ENCODE measurements at regions of chr3 and their contacts with region 1.

Region 1: GRCh38 chr3:12868039-12869034 is 27.0 kb upstream of the RPL32 start:
- DNase-seq: peak; percentile 83
- H3K4me3 Mint-ChIP-seq: no peak overlapping the region
- H3K27ac Mint-ChIP-seq: no peak overlapping the region
- H3K4me1 Mint-ChIP-seq: peaks cover 8% of the 10 kb centered on the region
- H3K27me3 Mint-ChIP-seq: peaks cover 33% of the 10 kb centered on the region
- CTCF ChIP-seq: peak; percentile 82

Region 2: GRCh38 chr3:12891985-12892839 is 23.9 kb after region 1 on chr3:
- CTCF ChIA-PET with region 1: interaction called, 27 read pairs
- POLR2A ChIA-PET with region 1: interaction called, 9 read pairs
- intact Hi-C with region 1: loop called (anchors 1 kb)
- DNase-seq: peak; percentile 65
- H3K4me3 Mint-ChIP-seq: no peak overlapping the region
- H3K27ac Mint-ChIP-seq: no peak overlapping the region
- H3K4me1 Mint-ChIP-seq: peaks cover 11% of the 10 kb centered on the region
- H3K27me3 Mint-ChIP-seq: peaks cover 31% of the 10 kb centered on the region
- CTCF ChIP-seq: peak; percentile 84

Region 3: GRCh38 chr3:12984023-12984823 is 115.9 kb after region 1 on chr3:
- CTCF ChIA-PET with region 1: interaction called, 6 read pairs
- POLR2A ChIA-PET with region 1: no interaction called
- intact Hi-C with region 1: loop called (anchors 1 kb)
- DNase-seq: peak; percentile 78
- H3K4me3 Mint-ChIP-seq: no peak overlapping the region
- H3K27ac Mint-ChIP-seq: no peak overlapping the region
- H3K4me1 Mint-ChIP-seq: no peaks in the 10 kb centered on the region
- H3K27me3 Mint-ChIP-seq: no peaks in the 10 kb centered on the region
- CTCF ChIP-seq: peak; percentile 81

Region 4: DNA sequence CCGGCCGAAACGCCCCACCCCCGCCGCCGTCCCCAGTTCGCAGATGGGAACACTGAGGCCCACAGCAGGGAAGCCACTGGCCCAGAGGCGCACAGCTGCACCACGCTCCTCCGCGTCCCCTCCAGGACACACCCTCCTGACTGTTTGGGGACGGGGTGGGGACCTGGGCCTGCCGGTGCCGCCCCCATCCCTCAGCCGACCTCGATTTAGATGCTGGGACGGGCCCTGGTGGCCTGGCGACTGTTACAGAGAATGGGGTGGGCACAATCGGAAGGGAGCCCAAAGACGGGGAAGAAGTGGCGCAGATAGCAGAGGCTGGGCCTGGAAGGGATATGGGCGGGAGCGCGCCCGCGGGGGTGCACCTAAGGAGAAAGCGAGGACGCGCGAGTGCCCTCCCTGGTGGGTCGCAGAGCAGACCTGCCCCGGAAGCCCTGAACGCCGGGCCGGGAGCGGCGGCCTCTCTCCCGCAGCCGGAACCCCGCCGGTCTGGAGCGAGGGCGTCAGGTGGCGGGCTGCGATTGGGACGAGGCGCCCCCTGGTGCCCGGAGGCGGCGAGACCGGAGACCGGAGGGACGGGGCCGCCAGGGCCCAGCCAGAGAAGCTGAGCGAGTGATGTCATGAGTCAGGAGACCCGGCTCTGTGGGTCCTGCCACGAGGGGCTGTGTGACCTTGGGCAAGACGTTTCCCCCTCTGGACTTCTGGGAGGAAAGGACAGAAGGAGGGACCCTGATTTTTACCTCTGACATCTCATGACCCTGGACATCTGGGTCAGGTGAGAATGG is 126.5 kb after region 1 on chr3:
- CTCF ChIA-PET with region 1: interaction called, 5 read pairs
- POLR2A ChIA-PET with region 1: no interaction called
- intact Hi-C with region 1: loop called (anchors 1 kb)
- DNase-seq: peak; percentile 77
- H3K4me3 Mint-ChIP-seq: peak overlapping the region; percentile 90
- H3K27ac Mint-ChIP-seq: no peak overlapping the region
- H3K4me1 Mint-ChIP-seq: no peaks in the 10 kb centered on the region
- H3K27me3 Mint-ChIP-seq: no peaks in the 10 kb centered on the region
- CTCF ChIP-seq: peak; percentile 71

Measured in MCF 10A (cell line).